Dorsolateral prefrontal cortex (tissue), 120 donors: ENCODE measurements at regions of chr15 and their contacts with region 1.

Region 1: GRCh38 chr15:59372352-59373211 is at the start of gene MYO1E:
- DNase-seq: peak; percentile 64 to 98 (median 94)
- H3K4me3 ChIP-seq: peak within 1 kb of the TSS; percentile 52 to 96 (median 86)
- H3K27ac ChIP-seq: peak within 1 kb of the TSS; percentile 16 to 98 (median 91)
- H3K27me3 ChIP-seq: no peaks in the 10 kb centered on the region
- CTCF ChIP-seq: peak in 22 of 56 donors; percentile 4 to 55 (median 28)
- total RNA-seq, gene MYO1E: 28.1 to 166 (median 63.9) TPM

Region 2: DNA sequence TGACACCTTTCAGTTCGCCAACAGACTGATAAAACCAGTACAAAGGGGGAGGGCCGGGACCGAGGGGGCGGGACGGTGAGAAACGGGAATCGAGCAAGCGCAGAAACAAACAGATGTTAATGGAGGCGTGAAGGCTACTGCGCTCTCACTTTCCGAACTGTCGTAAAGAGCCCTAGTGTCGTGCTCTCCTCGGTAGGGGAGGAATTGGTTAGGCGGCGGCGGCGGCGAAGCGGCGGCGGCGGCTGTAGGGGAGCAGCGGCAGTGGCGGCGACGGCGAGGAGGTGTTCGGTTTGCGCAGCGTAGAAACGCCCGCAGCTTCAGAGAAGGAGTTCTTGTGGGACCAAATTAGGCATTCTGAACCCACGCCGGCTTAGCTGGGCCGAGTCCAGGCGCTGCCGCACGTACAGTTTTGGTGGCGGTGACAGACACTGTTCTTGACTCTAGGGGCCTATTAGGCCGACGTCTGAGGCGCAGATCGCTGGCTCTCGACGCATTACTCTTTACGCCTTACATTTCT is 385.0 kb before region 1 on chr15 and contains the start of gene RNF111:
- intact Hi-C with region 1: no loop called
- DNase-seq: peak; percentile 69 to 91 (median 88)
- H3K4me3 ChIP-seq: peak within 1 kb of the TSS; percentile 53 to 99 (median 91)
- H3K27ac ChIP-seq: peak within 1 kb of the TSS; percentile 6 to 97 (median 91)
- H3K27me3 ChIP-seq: no peaks in the 10 kb centered on the region
- CTCF ChIP-seq: peak in 31 of 56 donors; percentile 4 to 49 (median 27)
- total RNA-seq, gene RNF111: 46.8 to 85.1 (median 63.3) TPM

Region 3: DNA sequence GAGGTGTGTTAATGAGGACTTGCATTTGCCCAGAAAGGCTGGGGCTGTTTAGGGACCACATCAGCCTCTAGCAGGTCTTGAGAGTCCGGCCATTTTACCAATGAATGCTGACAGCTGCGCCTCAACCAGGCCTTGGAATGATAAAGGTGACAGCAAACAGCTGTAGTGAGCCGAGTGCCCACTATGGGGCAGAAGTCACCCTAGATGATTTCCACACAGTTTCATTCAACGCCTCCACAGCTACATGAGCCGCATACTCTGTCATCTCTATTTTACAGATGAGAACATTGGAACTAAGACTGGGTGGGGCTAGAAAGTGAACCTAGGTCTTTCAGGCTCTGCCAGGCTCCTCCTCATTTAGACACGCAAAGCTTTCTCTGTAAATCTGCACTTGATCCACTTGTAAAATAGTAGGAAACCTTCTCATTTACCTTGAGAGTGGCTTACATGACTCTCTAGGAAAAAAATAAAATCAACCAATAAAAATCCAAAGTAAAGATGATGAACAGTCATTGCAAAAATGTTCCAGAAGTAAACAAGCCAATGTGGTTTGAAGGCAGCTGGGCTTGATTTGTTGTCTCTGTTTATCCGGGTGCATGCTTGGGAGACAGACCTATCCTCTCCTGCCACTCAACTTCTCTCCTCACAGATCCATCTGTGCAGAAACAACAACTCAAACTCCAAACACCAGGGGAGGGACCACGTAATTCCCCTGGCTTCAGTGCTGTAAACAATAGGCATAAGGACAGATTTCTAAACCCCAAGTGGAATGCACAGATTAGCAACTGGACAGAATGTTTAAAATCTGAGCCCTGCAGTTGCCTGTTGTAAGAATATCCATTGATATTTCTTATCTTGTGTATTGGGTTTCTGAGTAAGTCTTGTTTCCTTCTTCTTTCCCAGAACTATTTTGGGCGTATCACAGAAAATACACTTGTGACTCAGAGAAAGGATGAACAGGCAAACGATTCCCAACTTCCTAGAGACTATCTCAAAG is 197.4 kb before region 1 on chr15:
- intact Hi-C with region 1: loop called (anchors 5 kb)
- DNase-seq: peak in 9 of 10 donors; percentile 51 to 84 (median 71)
- H3K4me3 ChIP-seq: peak overlapping the region in 2 of 59 donors; percentile 7 to 10
- H3K27ac ChIP-seq: peak overlapping the region in 58 of 59 donors; percentile 24 to 92 (median 83)
- H3K27me3 ChIP-seq: no peaks in the 10 kb centered on the region
- CTCF ChIP-seq: peak; percentile 28 to 85 (median 74)

Region 4: GRCh38 chr15:59255647-59256380 is 116.8 kb before region 1 on chr15:
- intact Hi-C with region 1: loop called in 1 of 2 experiments (anchors 5 kb)
- DNase-seq: no peak
- H3K4me3 ChIP-seq: no peak overlapping the region
- H3K27ac ChIP-seq: peak overlapping the region in 17 of 59 donors; percentile 1 to 98 (median 42)
- H3K27me3 ChIP-seq: no peaks in the 10 kb centered on the region
- CTCF ChIP-seq: no peak

Region 5: DNA sequence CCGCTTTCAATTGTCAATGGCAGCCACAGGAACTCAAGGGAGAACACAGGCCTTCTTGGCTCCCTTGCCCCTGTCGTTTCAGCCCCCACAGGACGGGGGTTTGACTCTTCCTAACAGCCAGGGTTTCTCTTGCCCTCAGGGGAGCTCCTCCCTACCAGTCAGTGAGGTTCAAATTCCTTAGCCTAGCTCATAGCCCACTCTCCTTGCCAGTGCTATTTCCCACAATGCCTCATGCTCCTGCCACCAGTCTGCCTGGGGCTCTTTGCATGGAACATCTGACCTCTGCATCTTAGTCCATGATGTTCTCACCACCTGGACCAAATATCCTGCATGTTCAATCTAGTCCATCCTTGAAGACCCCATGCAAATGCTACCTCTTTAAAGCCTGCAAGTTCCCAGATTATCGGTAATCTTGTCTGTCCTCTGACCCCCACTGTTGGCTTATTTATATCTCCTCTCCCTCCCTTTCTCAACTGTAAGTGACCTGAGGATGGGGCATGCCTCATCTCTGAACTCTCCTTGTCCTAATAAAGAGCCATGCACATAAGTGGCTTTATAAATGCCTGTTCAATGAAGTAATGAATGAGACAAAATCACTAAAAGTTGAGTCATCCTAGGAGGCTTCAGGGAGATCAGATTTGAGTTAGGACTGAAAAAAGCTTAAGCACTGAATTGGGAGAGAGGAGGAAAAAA is 77.9 kb before region 1 on chr15:
- intact Hi-C with region 1: loop called (anchors 2 kb)
- DNase-seq: no peak
- H3K4me3 ChIP-seq: no peak overlapping the region
- H3K27ac ChIP-seq: peak overlapping the region in 53 of 59 donors; percentile 11 to 99 (median 90)
- H3K27me3 ChIP-seq: no peaks in the 10 kb centered on the region
- CTCF ChIP-seq: no peak

Region 6: GRCh38 chr15:59339252-59339672 is 33.3 kb before region 1 on chr15:
- intact Hi-C with region 1: loop called in 1 of 2 experiments (anchors 5 kb)
- DNase-seq: no peak
- H3K4me3 ChIP-seq: no peak overlapping the region
- H3K27ac ChIP-seq: peak overlapping the region in 2 of 59 donors; percentile 36 to 40
- H3K27me3 ChIP-seq: no peaks in the 10 kb centered on the region
- CTCF ChIP-seq: no peak

Region 7: DNA sequence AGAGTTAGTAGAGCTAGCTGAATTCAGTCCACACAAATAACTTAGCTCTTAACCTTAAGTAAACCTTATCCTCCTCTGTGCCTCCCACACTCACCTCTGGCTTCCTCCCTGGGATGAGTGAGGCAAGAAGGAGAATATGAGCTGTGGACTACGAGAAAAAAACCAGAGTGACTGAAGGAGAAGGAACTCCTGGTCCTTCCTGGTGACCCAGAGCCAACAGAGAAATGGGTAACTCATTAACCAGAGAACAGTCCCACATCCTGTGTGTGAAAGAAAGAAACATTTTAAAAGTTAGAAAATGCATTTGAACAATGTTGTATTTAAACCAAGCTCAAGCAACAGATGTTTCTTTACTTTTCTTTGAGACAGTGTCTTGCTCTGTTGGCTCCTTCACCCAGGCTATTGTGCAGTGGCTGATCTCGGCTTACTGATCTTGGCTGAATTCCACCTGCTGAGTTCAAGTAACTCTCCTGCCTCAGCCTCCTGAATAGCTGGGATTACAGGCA is 37.9 kb after region 1 on chr15:
- intact Hi-C with region 1: loop called in 1 of 2 experiments (anchors 5 kb)
- DNase-seq: no peak
- H3K4me3 ChIP-seq: no peak overlapping the region
- H3K27ac ChIP-seq: no peak overlapping the region
- H3K27me3 ChIP-seq: no peaks in the 10 kb centered on the region
- CTCF ChIP-seq: no peak

Region 8: GRCh38 chr15:59437817-59438562 is 65.4 kb after region 1 on chr15 and contains the start of gene FAM81A:
- intact Hi-C with region 1: loop called in 1 of 2 experiments (anchors 5 kb)
- DNase-seq: peak; percentile 67 to 92 (median 88)
- H3K4me3 ChIP-seq: peak within 1 kb of the TSS; percentile 57 to 83 (median 70)
- H3K27ac ChIP-seq: peak within 1 kb of the TSS in 58 of 59 donors; percentile 17 to 91 (median 77)
- H3K27me3 ChIP-seq: no peaks in the 10 kb centered on the region
- CTCF ChIP-seq: peak in 1 of 56 donors; percentile 9
- total RNA-seq, gene FAM81A: 23.4 to 120 (median 69.9) TPM